ENCODE measurements at regions of chr2 and their contacts with region 1.

Region 1: GRCh38 chr2:9770308-9771100 is 72.8 kb upstream of the TAF1B start:
- DNase-seq: peak; percentile 87
- H3K4me3 ChIP-seq: peak overlapping the region; percentile 31
- H3K27ac ChIP-seq: no peak overlapping the region
- H3K4me1 ChIP-seq: peaks cover 3% of the 10 kb centered on the region
- H3K27me3 ChIP-seq: no peaks in the 10 kb centered on the region
- CTCF ChIP-seq: peak; percentile 89

Region 2: DNA sequence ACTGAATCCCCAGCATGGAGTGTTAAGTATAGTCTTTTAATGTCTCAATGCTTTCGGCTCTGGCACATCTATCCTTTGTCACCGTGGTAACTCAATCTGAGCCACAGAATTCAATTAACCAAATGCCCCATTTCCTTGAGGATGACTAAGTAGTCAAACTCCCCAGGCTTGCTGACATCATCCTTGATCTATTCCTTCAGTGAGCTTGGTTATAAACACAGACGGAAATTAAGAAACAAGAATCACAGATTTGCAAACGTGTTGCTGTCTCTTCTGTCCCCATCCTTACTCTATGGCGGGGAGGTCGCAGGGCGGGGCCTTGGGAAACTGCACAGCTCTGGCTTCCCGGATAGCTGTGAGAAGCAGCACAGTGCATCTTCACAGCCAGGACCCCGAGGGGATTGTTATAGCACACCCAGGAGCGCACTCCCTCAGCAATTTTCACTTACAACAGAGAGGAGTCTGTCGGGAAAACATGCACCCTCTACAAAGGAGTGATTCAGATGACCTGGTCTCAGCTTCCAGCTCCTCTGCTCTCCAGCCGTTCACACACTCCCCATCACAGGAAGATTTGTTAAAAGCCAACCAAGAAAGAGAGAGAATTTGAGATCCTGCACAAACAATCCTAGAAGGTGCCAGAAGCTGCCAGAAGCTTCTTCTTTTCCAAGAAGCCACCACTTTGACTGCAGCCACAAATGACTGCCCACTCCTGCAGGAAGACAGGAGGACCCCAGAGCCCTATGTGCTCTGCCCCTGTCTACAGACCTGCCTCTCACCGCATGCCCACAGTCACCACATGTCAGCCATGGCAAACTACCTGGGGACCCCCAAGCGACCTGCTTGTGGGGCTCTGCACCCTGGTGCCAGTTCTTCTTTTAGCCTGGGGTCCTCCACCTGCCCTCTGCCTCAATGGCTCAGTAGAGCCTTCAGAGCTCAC is 94.8 kb before region 1 on chr2:
- CTCF ChIA-PET with region 1: no interaction called
- POLR2A ChIA-PET with region 1: no interaction called
- intact Hi-C with region 1: no loop called
- DNase-seq: peak; percentile 95
- H3K4me3 ChIP-seq: peak overlapping the region; percentile 19
- H3K27ac ChIP-seq: peak overlapping the region; percentile 51
- H3K4me1 ChIP-seq: peaks cover 18% of the 10 kb centered on the region
- H3K27me3 ChIP-seq: no peaks in the 10 kb centered on the region
- CTCF ChIP-seq: no peak

Region 3: GRCh38 chr2:9799665-9800632 is 29.4 kb after region 1 on chr2:
- CTCF ChIA-PET with region 1: interaction called, 19 read pairs
- POLR2A ChIA-PET with region 1: no interaction called
- intact Hi-C with region 1: no loop called
- DNase-seq: peak; percentile 87
- H3K4me3 ChIP-seq: no peak overlapping the region
- H3K27ac ChIP-seq: no peak overlapping the region
- H3K4me1 ChIP-seq: peaks cover 14% of the 10 kb centered on the region
- H3K27me3 ChIP-seq: no peaks in the 10 kb centered on the region
- CTCF ChIP-seq: peak; percentile 99

Region 4: GRCh38 chr2:9889812-9890261 is 119.3 kb after region 1 on chr2:
- CTCF ChIA-PET with region 1: no interaction called
- POLR2A ChIA-PET with region 1: no interaction called
- intact Hi-C with region 1: no loop called
- DNase-seq: no peak
- H3K4me3 ChIP-seq: no peak overlapping the region
- H3K27ac ChIP-seq: no peak overlapping the region
- H3K4me1 ChIP-seq: no peaks in the 10 kb centered on the region
- H3K27me3 ChIP-seq: no peaks in the 10 kb centered on the region
- CTCF ChIP-seq: no peak